HAP-1 (cell line): ENCODE measurements at regions of chr6 and their contacts with region 1.

Region 1: DNA sequence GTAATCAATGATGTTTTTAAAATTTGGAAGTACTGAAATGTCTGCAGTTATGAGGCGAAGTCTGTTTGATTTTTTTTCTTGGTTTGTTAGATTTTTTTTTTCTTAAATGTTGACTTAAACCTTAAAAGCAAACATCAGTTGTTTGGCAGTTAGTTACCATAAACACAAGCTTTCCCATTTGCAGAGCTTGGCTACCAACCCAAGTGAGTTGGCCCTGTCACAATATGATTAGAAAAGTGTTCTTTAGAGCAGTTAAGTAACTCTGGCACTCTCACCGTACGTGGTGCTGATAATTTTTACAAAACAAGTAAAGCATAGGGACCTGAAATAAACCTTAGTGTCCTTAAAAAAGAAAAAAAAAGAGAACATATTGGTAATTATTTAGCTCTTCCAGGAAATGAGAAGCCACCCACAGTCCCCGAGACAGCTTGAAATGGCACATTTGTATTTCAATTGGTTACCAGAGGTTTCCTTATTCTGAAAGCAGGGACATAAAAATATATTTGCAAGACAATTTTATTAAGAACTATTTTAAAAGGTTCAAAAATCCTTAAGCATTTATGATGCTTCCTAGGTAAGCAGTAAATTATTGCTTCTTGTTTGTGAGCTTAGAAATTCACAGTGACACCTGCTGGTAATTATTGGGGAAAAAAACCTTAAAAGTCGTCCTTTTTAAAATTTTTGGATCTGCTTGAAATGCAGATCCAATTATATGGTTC is 3.9 kb downstream of the HEY2 start:
- DNase-seq: no peak
- H3K4me3 ChIP-seq: no peak overlapping the region
- H3K4me1 ChIP-seq: peaks cover 14% of the 10 kb centered on the region
- H3K27me3 ChIP-seq: peaks cover 83% of the 10 kb centered on the region

Region 2: DNA sequence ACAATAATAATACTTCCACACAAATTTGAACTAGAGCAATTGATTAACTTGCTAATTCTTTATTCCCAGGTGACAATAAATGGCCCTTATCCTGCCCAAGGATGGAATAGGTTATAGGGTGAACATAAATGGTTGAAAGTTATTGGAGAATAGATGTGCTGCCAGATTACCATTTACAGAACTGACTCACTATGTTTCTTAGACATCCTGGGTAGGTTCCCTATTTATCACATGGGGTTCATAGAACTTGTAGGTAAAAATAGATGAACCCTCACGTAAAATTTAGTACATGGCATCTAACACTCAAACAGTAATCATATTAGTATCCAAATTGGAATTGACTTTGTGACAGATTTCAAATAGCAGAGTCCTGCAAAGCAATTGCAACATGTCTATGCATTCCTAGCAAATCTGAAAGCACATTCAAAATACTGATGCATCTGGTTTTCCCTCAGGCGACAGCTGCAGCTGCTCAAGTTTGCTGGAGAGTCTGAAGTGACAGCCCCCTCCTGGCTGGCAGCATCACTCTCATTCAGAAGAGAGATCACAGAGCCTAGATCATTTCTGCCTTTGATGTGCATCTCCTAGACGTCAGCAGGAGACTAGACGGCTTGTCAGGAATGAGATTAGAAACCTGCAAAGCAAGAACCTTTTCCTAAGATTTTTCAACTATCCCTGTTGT is 871.3 kb before region 1 on chr6:
- in situ Hi-C with region 1: loop called (anchors 25 kb)
- DNase-seq: peak in 1 of 2 experiments; percentile 10
- H3K4me3 ChIP-seq: no peak overlapping the region
- H3K4me1 ChIP-seq: peaks cover 11% of the 10 kb centered on the region
- H3K27me3 ChIP-seq: peaks cover 18% of the 10 kb centered on the region

Region 3: DNA sequence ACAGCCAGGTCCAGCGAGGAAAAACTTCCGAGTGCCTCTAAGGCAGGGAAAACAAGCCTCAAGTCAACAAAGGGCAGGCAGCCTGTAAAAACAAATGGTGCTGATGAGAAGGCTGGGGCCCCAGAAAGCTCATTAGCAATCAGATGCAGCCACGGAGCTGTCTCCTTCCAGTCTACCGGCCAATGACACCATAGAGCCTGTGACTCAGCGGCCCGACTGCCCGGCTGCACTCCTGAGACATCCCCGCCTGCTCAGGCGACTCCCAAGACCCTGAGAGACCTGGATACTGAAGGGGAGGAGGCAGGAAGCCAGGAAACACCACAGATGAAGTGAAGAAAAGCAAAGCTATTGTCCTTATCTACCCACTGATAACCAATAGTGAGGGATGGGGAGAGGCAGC is 331.5 kb before region 1 on chr6:
- in situ Hi-C with region 1: no loop called
- DNase-seq: peak; percentile 13 to 23
- H3K4me3 ChIP-seq: no peak overlapping the region
- H3K4me1 ChIP-seq: no peaks in the 10 kb centered on the region; the same call in 1 of the 2 replicates
- H3K27me3 ChIP-seq: no peaks in the 10 kb centered on the region; the same call in 1 of the 2 replicates

Region 4: GRCh38 chr6:125584468-125585029 is 168.8 kb before region 1 on chr6:
- in situ Hi-C with region 1: no loop called
- DNase-seq: no peak
- H3K4me3 ChIP-seq: no peak overlapping the region
- H3K4me1 ChIP-seq: no peaks in the 10 kb centered on the region
- H3K27me3 ChIP-seq: no peaks in the 10 kb centered on the region

Region 5: DNA sequence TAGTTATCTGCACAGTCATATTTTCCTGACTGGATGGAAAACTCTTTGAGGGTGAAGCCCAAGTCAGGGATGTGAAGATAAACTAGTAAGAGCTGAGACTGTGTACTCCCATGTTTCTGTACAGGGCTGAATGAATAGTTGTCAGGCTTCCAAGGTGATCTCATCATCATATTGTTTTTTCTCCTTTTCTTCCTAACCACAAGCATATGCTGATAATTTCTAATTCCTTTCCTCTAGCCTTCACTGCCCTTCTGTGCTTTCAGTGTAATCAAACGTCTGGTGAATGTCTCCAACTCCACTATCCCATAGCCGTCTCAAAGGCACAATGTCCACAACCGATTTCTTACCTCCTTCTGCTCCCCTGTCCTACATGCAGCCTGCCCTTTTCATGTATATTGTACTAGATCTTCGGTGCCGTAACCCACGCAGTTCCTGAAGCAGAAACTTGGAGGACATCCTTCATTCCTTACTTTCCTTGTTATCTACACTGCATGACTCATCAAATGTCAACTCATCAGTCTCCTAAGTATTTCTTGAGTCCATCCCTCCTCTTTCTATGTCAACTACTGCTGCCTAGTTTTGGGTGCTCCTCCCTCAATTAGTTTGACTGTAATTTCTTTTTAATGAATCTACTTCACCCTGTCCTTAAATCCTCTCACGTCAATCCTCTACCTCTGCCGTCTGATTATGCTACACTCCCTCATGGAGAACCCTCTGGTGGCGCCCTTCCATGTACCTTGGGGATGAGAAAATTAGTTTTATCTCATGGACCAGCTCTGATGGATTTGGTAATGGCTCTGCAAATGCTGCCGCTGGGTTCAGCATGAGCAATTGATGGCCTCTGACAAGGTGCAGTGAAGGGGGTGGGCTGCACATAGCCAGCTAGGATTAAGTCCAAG is 59.3 kb after region 1 on chr6:
- in situ Hi-C with region 1: no loop called
- DNase-seq: no peak
- H3K4me3 ChIP-seq: no peak overlapping the region
- H3K4me1 ChIP-seq: 0 out of 2 replicates have a peak, but pooled peaks cover 4% of the 10 kb centered on the region
- H3K27me3 ChIP-seq: no peaks in the 10 kb centered on the region